MCF 10A (cell line): ENCODE measurements at regions of chr15 and their contacts with region 1.

Region 1: GRCh38 chr15:60660290-60661051 is 181.5 kb upstream of the ICE2 start:
- DNase-seq: peak; percentile 78
- H3K4me3 Mint-ChIP-seq: peak overlapping the region; percentile 40
- H3K27ac Mint-ChIP-seq: peak overlapping the region; percentile 63
- H3K4me1 Mint-ChIP-seq: peaks cover 13% of the 10 kb centered on the region
- H3K27me3 Mint-ChIP-seq: no peaks in the 10 kb centered on the region
- CTCF ChIP-seq: no peak

Region 2: DNA sequence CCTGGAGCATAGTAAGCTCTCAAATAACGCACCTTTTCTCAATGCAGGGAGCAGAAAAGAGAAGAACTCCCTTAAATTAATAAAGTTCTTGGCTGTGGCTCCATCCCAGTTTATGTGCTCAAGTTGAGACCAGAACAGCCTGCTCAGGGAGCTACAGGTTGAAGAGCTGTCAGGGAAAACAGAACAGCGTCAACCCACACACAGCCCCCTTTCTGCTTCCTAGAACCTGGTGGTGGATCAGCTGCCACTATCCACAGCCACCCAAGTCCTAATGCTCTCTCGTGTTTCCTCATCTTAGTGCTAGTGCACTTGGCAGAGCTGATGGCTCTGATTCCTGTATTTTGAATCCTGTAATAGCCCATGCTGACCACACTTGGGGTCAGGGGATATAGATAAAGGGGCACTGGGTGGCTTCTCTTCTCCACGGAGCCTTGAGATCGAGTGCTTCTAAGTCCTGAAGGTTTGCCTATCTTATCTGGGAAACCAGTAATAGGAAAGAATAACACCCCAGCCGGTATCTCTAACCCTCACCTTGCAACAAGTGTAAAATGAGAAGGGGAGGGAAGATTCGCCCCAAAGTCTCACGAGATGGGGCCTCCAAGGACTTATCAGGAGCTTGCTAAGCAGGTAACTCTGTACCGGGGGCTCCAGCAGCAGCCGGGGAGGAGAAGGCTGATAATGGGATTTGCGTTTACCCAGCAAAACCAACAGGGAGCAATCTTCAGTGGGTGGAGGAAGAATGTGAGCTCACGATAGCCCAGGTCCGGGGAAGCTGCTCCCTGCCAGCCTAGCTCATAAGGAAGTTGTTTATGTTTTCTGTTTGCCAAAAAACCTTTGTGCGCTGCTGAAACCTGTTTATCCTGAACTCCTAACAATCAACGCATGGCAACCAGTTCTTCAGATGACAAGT is 45.4 kb before region 1 on chr15:
- CTCF ChIA-PET with region 1: no interaction called
- POLR2A ChIA-PET with region 1: no interaction called
- intact Hi-C with region 1: no loop called
- DNase-seq: no peak
- H3K4me3 Mint-ChIP-seq: no peak overlapping the region
- H3K27ac Mint-ChIP-seq: no peak overlapping the region
- H3K4me1 Mint-ChIP-seq: peaks cover 9% of the 10 kb centered on the region
- H3K27me3 Mint-ChIP-seq: peaks cover 9% of the 10 kb centered on the region
- CTCF ChIP-seq: no peak

Region 3: GRCh38 chr15:60673918-60674558 is 13.6 kb after region 1 on chr15:
- CTCF ChIA-PET with region 1: interaction called, 4 read pairs
- POLR2A ChIA-PET with region 1: interaction called, 23 read pairs
- intact Hi-C with region 1: no loop called
- DNase-seq: peak; percentile 96
- H3K4me3 Mint-ChIP-seq: no peak overlapping the region
- H3K27ac Mint-ChIP-seq: peak overlapping the region; percentile 69
- H3K4me1 Mint-ChIP-seq: peaks cover 9% of the 10 kb centered on the region
- H3K27me3 Mint-ChIP-seq: peaks cover 10% of the 10 kb centered on the region
- CTCF ChIP-seq: no peak